Activated T-helper 2 cell treated with anti-CD3 and anti-CD28 coated beads, Interferon-gamma antibody, Interleukin-2, Interleukin-4, amounts not matched to agents 10 μg/mL and 5 μg/mL and 100 μg/mL, durations not matched to agents 14 hours and 24 hours and 36 hours (primary cell): ENCODE measurements at regions of chr1 and their contacts with region 1.

Region 1: DNA sequence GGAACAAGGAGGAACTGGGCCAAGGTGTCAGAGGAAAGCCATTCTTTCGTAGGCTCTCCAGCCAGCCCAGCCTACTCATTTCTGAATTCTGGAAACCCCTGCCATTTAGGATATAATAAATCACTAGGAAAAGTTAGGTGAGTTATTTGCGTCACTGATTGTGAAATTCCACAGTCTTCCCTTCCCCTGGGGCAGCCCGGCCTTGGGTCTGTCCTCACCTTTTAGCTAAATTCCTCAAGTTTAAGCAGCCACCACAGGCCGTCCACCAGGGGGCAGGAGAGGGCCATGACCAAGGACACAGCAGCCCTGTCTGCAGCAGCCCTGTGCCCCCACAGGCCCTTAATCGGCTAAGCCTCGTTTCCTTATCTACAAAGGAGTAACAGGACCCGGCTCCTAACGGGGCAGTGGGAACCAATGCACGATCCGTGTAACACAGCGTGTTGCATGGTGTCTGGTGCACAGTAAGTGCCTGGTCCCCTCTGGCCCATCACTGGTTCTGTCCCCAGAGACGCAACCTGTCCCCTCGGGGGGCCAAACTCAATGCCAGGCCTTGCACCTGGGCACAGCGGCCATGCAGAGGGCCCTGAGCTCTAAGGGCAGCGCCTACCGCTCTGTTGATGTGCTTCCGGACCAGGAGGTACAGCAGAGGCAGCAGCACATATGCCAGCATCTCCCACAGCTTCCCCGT is 18.1 kb downstream of the GPR157 start:
- DNase-seq: peak; percentile 70
- H3K4me3 Mint-ChIP-seq: no peak overlapping the region
- H3K27ac Mint-ChIP-seq: no peak overlapping the region
- H3K4me1 Mint-ChIP-seq: peaks cover 14% of the 10 kb centered on the region
- H3K27me3 Mint-ChIP-seq: no peaks in the 10 kb centered on the region

Region 2: DNA sequence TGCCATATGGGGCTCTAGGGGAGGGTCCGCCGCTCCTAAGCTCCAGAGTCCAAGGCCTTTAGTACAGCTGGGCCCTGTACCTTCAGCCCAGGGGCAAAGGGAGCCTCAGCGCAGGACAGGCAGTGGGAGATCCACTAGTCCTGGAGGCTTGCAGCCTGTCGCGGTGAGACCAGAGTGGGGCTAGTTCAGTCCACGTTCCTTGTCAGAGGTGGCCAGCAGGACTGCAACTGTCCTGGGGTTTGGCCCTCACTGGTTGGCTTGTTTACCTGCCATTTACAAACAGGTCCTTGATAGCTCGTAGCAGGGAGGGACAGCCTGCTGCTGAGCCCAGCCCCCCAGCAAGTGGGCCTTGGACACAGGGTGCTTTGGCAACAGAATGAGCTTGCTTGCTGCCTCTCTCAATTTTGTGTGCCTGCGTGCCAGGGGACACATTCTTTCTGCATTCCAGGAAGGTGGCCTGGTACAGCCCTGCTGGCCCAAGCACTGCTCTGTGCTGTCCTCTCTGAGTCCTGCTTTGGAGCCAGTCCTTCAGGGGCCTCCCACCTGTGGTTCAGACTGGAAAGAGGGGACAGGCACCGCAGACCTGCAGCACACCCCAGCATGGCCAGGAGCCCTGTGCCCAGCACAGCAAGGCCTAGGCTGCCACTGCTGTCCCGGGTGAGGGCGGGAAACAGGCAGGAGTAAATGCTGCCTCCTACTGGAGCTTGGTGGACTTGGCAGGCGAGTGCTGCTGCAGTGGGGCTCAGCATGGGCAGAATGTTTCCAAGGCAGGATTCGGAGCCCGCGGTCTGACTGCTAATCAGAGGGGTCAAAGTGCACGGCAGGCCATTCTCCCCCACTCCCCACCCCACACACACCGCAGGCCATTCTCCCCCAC is 139.0 kb after region 1 on chr1:
- intact Hi-C with region 1: loop called (anchors 5 kb)
- DNase-seq: peak; percentile 23
- H3K4me3 Mint-ChIP-seq: no peak overlapping the region
- H3K27ac Mint-ChIP-seq: no peak overlapping the region
- H3K4me1 Mint-ChIP-seq: peaks cover 21% of the 10 kb centered on the region
- H3K27me3 Mint-ChIP-seq: no peaks in the 10 kb centered on the region